ENCODE measurements at regions of chr9 and their contacts with region 1.

Region 1: DNA sequence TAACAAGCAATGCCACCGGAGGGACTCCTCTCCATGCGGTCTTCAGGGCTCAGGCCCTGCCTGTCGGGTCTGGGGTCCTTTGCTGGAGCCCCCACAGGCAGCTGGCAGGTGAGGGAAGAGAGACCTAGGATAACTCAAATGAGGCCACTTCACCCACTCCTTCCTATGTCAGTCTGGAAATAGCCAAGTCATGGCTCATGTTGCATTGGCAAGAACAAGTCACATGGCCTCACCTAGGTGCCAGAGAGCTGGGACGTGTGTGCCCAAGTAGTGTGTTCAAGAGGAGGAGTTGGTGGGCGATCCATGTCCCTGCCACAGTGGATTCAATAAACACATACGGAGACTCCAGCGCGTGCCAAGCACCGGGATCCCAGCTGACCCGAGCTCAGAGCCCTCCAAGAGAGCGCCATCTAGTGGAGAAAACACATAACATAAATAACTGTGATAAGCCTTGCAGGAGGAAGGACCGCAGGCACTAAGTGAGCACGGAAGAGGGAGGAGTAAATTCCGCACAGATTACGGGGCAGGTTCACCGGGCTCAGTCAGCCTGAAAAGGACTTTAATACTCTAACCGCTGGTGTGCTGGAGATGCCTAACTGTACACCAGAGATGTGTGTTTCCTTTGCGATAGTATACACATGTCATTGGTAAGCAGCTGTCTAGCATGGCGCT is 580.8 kb downstream of the CCDC171 start:
- DNase-seq: peak; percentile 19
- H3K4me3 Mint-ChIP-seq: no peak overlapping the region
- H3K27ac Mint-ChIP-seq: no peak overlapping the region
- H3K4me1 Mint-ChIP-seq: no peaks in the 10 kb centered on the region
- H3K27me3 Mint-ChIP-seq: peaks cover 2% of the 10 kb centered on the region

Region 2: GRCh38 chr9:15837079-15837679 is 296.5 kb before region 1 on chr9:
- CTCF ChIA-PET with region 1: no interaction called
- intact Hi-C with region 1: loop called (anchors 1 kb)
- DNase-seq: peak; percentile 29
- H3K4me3 Mint-ChIP-seq: no peak overlapping the region
- H3K27ac Mint-ChIP-seq: no peak overlapping the region
- H3K4me1 Mint-ChIP-seq: no peaks in the 10 kb centered on the region
- H3K27me3 Mint-ChIP-seq: no peaks in the 10 kb centered on the region

Region 3: DNA sequence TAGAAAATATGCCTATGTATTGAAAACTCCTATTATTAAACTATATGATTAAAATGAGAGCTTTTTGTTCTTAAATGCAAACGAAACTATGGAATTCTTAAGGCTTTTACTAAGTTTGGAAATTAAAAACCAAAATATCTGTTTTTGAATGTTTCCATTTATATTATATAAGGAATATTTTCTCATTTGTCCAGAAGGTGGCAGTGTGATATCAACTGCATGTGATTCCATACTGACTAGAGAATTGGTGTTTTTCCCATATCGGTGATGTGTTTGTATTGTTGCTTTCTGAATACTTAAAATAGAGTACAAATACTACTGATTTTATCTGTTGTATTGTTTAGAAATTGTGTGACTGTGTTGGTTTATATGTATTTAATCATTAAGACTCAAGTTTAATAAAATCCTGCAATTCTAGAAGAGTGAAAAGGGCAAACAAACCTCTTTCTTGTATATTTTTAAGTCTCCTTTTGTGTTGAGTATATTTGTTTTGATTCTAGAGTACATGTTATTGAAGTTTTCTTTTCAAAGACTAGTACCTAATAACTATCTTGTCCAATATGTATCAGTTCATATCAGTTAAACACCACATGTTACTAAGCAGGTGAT is 260.0 kb before region 1 on chr9:
- CTCF ChIA-PET with region 1: interaction called, 5 read pairs
- intact Hi-C with region 1: loop called (anchors 1 kb)
- DNase-seq: no peak
- H3K4me3 Mint-ChIP-seq: no peak overlapping the region
- H3K27ac Mint-ChIP-seq: no peak overlapping the region
- H3K4me1 Mint-ChIP-seq: no peaks in the 10 kb centered on the region
- H3K27me3 Mint-ChIP-seq: no peaks in the 10 kb centered on the region

Region 4: GRCh38 chr9:16023446-16023845 is 110.2 kb before region 1 on chr9:
- CTCF ChIA-PET with region 1: no interaction called
- intact Hi-C with region 1: no loop called
- DNase-seq: no peak
- H3K4me3 Mint-ChIP-seq: no peak overlapping the region
- H3K27ac Mint-ChIP-seq: no peak overlapping the region
- H3K4me1 Mint-ChIP-seq: no peaks in the 10 kb centered on the region
- H3K27me3 Mint-ChIP-seq: no peaks in the 10 kb centered on the region

Region 5: DNA sequence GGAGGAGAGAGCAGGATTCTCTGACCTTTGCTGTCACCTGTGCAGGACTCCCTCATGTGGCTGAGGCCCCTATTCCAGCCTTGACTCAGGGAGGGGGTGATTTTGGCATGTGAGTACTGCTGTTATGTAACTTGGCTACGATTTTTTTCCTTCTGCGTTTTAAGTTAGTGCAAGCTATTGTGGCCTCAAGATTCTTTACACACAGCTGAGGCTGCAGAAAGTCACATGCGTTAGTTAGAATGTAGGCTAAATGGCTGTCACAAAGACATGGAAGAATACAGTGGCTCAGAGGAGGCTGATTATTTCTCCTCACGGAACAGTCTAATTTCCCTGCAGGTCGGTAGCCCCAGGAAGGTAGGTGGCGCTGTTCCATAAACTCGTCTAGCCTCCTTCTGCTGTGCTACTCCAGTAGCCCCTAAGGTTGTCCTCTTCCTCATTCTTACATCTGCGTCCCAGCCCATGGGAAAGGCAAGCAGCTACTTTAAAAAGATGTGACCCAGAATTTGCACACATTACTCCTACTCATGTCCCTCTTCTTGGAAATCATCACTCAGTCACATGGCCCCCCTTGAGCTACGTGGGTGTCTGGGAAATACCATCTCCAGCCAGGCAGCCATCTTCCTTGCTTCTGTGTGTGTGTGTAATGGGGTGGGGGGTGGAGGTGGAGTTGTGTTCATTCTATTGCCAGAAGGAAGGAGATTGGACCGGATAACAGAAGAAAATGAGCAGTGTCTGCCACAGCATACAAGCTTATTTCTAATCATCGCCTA is 94.3 kb before region 1 on chr9:
- CTCF ChIA-PET with region 1: no interaction called
- intact Hi-C with region 1: loop called (anchors 1 kb)
- DNase-seq: peak; percentile 30
- H3K4me3 Mint-ChIP-seq: no peak overlapping the region
- H3K27ac Mint-ChIP-seq: no peak overlapping the region
- H3K4me1 Mint-ChIP-seq: no peaks in the 10 kb centered on the region
- H3K27me3 Mint-ChIP-seq: no peaks in the 10 kb centered on the region

Measured in activated naive CD4-positive, alpha-beta T cell treated with anti-CD3 and anti-CD28 coated beads for 36 hours (primary cell).